Left ventricle myocardium superior (tissue), 1 donor: ENCODE measurements at regions of chr4 and their contacts with region 1.

Region 1: GRCh38 chr4:173529477-173530325 is at the start of gene HAND2:
- DNase-seq: peak; percentile 91
- ATAC-seq: peak; percentile 71
- total RNA-seq, gene HAND2: 180 TPM

Region 2: GRCh38 chr4:172900930-172901329 is 628.8 kb before region 1 on chr4:
- intact Hi-C with region 1: no loop called
- DNase-seq: no peak
- ATAC-seq: no peak

Region 3: DNA sequence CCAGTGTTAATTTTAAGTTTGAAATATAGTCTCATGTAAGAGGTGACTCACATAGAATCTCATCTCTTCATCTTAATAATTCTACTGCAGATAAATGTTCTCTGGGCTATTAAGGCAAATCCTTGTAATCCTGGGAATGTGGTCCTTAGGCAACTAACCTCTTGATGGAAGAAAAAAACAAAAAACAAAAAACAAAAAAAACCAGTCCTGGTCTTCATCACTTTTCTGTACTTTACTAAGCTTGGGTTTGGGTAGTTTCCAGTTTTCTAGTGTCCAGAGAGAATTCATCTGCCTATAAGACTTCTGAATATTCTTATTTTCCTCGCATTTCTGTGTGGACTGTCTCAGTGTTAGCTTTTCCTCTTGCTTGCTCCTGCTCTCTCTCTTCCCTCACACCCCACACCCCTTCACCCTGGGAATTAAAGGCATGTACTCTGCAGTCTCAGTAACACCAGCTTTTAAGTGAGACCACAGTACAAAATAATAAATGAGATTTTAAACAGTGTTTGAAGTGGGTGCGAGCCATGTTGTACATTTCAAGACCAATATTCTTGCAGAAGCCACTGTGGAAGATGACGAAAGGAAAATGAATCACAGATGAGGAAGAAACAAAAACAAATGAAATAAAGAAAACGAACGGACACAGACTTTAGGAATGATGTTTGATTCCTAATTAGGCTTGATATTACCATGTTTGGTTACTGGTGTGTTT is 51.3 kb before region 1 on chr4:
- intact Hi-C with region 1: no loop called
- DNase-seq: no peak
- ATAC-seq: peak; percentile 52

Region 4: DNA sequence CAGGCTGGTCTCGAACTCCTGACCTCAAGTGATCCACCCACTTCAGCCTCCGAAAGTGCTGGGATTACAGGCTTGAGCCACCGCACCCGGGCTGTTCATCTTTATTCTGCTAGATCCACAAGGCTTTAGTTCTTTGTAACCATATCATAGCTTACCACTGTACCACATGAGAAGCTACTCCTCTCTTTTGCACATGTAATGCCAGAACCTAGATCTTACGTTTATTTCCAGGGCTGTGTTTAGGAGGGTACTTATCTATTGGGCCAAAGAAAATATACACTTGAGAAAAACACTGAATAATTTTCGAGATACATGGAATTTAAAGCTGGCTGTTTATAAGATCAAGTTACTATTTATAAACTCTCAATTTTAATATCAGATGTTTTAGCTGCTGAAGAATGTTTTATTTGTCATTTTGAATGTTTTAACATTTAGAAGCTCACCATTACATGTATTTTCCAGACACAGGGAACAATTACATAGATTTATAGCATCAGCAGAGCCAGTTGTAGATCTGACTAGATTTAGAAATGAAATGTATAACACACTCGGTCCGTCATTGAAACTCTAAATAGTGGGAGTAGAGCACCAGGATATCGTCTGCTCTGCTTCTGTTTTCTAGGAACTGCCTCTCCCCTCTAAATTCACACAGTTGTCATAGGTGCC is 155.6 kb after region 1 on chr4:
- intact Hi-C with region 1: loop called (anchors 10 kb)
- DNase-seq: no peak
- ATAC-seq: peak; percentile 8

Region 5: DNA sequence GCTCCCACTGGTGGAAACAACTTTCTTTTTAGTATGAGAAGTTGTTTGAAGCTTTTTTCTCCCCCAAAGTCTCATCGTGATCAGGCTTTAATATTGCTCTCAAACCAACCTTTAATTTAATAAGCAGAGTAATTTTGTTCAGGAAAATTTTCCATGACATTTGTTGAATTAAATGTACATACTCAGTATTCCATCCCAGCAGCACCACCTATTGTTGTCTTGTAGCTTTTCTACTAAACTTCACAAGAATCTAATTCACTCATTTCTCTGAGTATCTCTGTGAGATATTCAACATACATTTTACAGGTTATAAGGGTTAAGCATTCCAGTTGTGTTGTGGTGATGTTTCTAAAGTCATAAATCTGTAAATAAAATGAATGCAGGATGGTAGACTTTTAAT is 218.7 kb after region 1 on chr4:
- intact Hi-C with region 1: loop called (anchors 5 kb)
- DNase-seq: no peak
- ATAC-seq: peak; percentile 24